ENCODE measurements at regions of chr20 and their contacts with region 1.

Region 1: DNA sequence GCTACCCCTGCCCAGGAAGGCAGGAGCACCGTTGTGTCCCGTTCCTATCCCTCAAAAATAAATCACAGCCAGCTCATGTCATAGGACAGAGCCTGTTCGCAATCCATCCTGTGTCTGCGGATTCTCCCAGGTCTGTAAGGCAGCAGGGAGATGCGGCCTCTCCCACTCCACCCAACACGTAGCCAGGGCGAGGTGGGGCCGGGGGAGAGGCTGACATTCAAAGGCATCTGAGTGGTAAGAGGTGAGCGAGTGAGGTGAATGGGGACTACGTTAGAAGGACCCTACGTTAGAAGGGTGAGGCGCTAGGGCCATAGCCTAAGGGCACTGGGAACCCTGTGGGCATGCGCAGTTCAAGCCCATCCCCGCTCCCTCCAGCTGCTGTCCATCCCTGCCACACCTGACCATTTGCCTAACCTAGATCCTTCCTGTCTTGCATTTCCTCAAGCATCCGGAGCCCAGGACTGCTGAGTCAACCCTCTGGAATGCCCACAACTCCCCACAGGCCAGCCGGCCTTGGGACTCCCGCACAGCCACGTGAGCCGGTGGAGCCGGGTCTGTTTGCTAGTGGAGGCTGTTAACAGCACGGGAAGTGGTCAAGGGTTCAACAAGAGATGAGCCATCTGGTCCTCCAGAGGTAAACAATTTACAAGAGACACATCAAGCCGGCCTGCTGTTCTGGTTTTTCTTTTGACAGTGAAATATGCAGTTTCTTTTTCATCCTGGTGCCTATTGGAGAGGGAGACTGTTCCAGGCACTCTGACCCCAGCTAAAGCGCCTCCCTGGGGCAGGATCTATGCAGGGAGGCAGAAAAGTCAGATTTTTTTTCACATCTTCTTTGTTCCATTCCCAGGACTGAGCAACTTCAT is 45.9 kb downstream of the RIPOR3 start:
- DNase-seq: peak; percentile 100
- ATAC-seq: peak; percentile 94
- H3K4me3 ChIP-seq: peak overlapping the region in 2 of 3 experiments; percentile 32 to 51; a peak in 3 of 6 replicates
- H3K27ac ChIP-seq: peak overlapping the region; percentile 51
- H3K4me1 ChIP-seq: peaks cover 63% of the 10 kb centered on the region
- H3K27me3 ChIP-seq: no peaks in the 10 kb centered on the region; a peak in 1 of 5 replicates
- CTCF ChIP-seq: peak; percentile 35; the same call in 1 of the 2 replicates
- EP300 ChIP-seq: peak in 1 of 2 experiments; percentile 89; a peak in 3 of 4 replicates
- POLR2A ChIP-seq: peak in 1 of 2 experiments; percentile 56; a peak in 2 of 4 replicates
- RAD21 ChIP-seq: peak; percentile 0; the same call in 1 of the 2 replicates

Region 2: GRCh38 chr20:50724851-50725721 is 79.6 kb after region 1 on chr20:
- CTCF ChIA-PET with region 1: no interaction called
- POLR2A ChIA-PET with region 1: no interaction called
- in situ Hi-C with region 1: loop called (anchors 25 kb)
- intact Hi-C with region 1: loop called (anchors 5 kb)
- DNase-seq: peak; percentile 54
- ATAC-seq: peak; percentile 40
- H3K4me3 ChIP-seq: peak overlapping the region; percentile 1 to 58 (median 10); a peak in 5 of 6 replicates
- H3K27ac ChIP-seq: no peak overlapping the region
- H3K4me1 ChIP-seq: peaks cover 74% of the 10 kb centered on the region
- H3K27me3 ChIP-seq: no peaks in the 10 kb centered on the region; a peak in 1 of 5 replicates
- CTCF ChIP-seq: no peak
- EP300 ChIP-seq: no peak
- POLR2A ChIP-seq: no peak
- RAD21 ChIP-seq: no peak

Measured in HepG2 (cell line).